Prostate gland (tissue), 2 donors: ENCODE measurements at regions of chr4 and their contacts with region 1.

Region 1: DNA sequence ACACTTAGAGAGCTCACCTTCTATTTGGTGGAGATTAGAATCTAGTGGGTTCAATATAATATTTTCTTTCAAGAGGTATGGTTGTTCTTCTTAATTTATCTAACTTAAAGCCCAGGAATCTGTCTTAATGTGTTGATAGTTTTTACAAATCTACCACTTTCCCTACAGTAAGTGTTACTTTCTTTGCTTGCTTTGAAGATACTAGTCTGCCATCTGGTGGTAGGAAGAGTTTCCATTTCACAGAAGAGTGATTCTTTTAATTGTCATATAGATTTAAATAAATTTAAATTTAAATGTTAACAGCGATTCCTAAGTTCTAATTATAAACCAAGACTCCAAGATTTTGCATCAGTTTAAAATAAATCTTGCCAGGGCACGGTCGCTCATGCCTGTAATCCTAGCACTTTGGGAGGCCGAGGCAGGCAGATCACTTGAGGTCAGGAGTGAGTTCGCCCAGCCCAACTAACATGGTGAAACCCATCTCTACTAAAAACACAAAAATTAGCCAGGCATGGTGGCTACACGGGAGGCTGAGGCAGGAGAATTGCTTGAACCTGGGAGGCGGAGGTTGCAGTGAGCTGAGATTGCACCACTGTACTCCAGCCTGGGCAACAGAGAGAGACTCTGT is 43.5 kb downstream of the NUDT9 start:
- DNase-seq: peak; percentile 21
- H3K4me3 ChIP-seq: no peak overlapping the region
- H3K27ac ChIP-seq: no peak overlapping the region
- H3K4me1 ChIP-seq: no peaks in the 10 kb centered on the region
- H3K27me3 ChIP-seq: no peaks in the 10 kb centered on the region
- CTCF ChIP-seq: peak; percentile 25 to 85 (median 79)
- POLR2A ChIP-seq: no peak

Region 2: GRCh38 chr4:87354168-87355102 is 111.4 kb before region 1 on chr4:
- intact Hi-C with region 1: loop called (anchors 5 kb)
- DNase-seq: no peak
- H3K4me3 ChIP-seq: no peak overlapping the region
- H3K27ac ChIP-seq: no peak overlapping the region
- H3K4me1 ChIP-seq: no peaks in the 10 kb centered on the region
- H3K27me3 ChIP-seq: no peaks in the 10 kb centered on the region
- CTCF ChIP-seq: no peak
- POLR2A ChIP-seq: no peak

Region 3: GRCh38 chr4:87375719-87376291 is 90.0 kb before region 1 on chr4:
- intact Hi-C with region 1: loop called (anchors 5 kb)
- DNase-seq: peak; percentile 42
- H3K4me3 ChIP-seq: no peak overlapping the region
- H3K27ac ChIP-seq: no peak overlapping the region
- H3K4me1 ChIP-seq: no peaks in the 10 kb centered on the region
- H3K27me3 ChIP-seq: no peaks in the 10 kb centered on the region
- CTCF ChIP-seq: peak in 3 of 4 experiments; percentile 62 to 76 (median 73)
- POLR2A ChIP-seq: no peak

Region 4: GRCh38 chr4:87390891-87391575 is 74.8 kb before region 1 on chr4 and contains the start of gene HSD17B11:
- intact Hi-C with region 1: loop called (anchors 5 kb)
- DNase-seq: peak; percentile 90
- H3K4me3 ChIP-seq: peak within 1 kb of the TSS; percentile 40 to 46
- H3K27ac ChIP-seq: peak within 1 kb of the TSS; percentile 79 to 87
- H3K4me1 ChIP-seq: no peaks in the 10 kb centered on the region
- H3K27me3 ChIP-seq: no peaks in the 10 kb centered on the region
- CTCF ChIP-seq: peak in 3 of 4 experiments; percentile 32 to 46 (median 32)
- POLR2A ChIP-seq: peak; percentile 75
- total RNA-seq, gene HSD17B11: 38.2 to 45.2 TPM

Region 5: DNA sequence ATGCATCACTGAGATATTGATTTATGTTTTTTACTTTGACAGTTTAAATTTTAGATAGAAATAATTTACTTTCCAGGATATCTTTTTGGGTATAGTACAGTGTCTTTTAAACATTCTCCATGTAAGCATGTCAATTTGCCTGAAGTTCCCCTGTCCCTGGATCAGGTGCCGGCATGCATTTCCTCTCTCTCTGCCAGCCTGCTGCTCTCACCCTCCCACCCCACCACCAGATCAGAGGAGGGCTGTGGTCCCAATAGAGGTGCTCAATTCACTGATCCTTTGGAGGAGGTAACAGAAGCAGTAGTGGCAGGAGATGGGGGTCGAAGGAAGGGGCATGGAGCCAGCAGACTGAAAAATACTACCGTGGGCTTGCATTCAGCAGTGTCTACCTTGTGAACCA is 114.2 kb after region 1 on chr4:
- intact Hi-C with region 1: no loop called
- DNase-seq: no peak
- H3K4me3 ChIP-seq: no peak overlapping the region
- H3K27ac ChIP-seq: no peak overlapping the region
- H3K4me1 ChIP-seq: no peaks in the 10 kb centered on the region
- H3K27me3 ChIP-seq: no peaks in the 10 kb centered on the region
- CTCF ChIP-seq: no peak
- POLR2A ChIP-seq: no peak

Region 6: DNA sequence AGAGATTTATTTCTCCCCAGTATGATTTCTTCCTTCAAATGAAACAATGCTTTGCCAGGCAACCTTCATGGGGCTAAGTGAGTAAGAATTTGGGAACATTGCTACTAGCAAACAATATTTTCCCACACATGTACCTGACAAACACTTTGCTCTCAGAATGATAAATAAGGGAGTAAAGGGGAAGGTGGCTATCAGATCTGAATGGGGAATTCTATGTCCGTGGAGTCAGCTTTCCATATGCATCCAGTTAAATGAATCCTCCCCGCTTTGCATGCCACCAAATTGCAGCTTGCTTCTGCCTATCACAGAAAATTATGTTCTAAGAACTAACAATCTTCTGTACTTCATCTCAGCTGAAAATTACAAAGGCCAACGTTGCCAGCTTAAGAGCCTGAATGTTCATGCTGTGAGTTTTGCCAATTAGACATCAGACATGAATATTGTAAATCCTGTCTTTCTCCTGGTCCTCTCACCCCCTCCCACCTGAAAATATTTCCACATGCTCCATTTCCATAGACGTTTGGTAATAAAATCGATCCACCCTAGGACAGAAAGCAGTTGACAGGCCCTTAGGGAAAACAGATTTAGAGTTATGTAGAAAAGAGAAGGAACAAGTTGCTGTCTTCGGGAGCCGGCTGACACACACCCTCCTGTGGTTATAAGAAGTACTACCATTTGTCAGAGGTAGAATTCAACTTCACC is 373.2 kb after region 1 on chr4:
- intact Hi-C with region 1: loop called (anchors 10 kb)
- DNase-seq: no peak
- H3K4me3 ChIP-seq: no peak overlapping the region
- H3K27ac ChIP-seq: no peak overlapping the region
- H3K4me1 ChIP-seq: no peaks in the 10 kb centered on the region
- H3K27me3 ChIP-seq: no peaks in the 10 kb centered on the region
- CTCF ChIP-seq: peak; percentile 51 to 66 (median 58)
- POLR2A ChIP-seq: no peak